PC-9 (cell line): ENCODE measurements at regions of chr17 and their contacts with region 1.

Region 1: DNA sequence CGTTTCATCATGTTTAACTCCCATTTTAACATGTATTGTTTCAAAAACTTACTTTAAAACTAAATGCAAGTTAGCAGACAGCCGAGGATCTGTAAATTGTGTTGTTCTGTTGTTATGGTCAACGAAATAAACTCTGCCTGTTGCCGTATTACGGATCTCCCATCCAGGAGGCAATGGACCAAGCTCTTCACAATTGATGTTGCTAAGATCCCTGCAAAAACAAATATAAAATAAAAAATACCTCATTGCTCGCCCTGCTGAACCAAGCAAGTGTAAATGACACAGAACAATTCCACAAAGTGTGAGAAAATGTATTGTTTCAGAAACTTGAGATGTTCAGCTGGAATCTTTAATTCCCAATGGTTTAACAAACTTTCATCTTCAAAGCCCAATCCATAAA is 65.0 kb downstream of the CEP95 start:
- DNase-seq: no peak
- H3K4me3 ChIP-seq: no peak overlapping the region
- H3K27ac ChIP-seq: peak overlapping the region; percentile 15; the same call in 1 of the 2 replicates
- H3K4me1 ChIP-seq: no peaks in the 10 kb centered on the region
- H3K27me3 ChIP-seq: no peaks in the 10 kb centered on the region
- CTCF ChIP-seq: no peak

Region 2: GRCh38 chr17:64554028-64554637 is 17.6 kb before region 1 on chr17:
- CTCF ChIA-PET with region 1: no interaction called
- POLR2A ChIA-PET with region 1: interaction called, 6 read pairs
- intact Hi-C with region 1: loop called (anchors 2 kb)
- DNase-seq: no peak
- H3K4me3 ChIP-seq: no peak overlapping the region
- H3K27ac ChIP-seq: no peak overlapping the region
- H3K4me1 ChIP-seq: no peaks in the 10 kb centered on the region
- H3K27me3 ChIP-seq: no peaks in the 10 kb centered on the region
- CTCF ChIP-seq: no peak